ENCODE measurements at regions of chr1 and their contacts with region 1.

Region 1: DNA sequence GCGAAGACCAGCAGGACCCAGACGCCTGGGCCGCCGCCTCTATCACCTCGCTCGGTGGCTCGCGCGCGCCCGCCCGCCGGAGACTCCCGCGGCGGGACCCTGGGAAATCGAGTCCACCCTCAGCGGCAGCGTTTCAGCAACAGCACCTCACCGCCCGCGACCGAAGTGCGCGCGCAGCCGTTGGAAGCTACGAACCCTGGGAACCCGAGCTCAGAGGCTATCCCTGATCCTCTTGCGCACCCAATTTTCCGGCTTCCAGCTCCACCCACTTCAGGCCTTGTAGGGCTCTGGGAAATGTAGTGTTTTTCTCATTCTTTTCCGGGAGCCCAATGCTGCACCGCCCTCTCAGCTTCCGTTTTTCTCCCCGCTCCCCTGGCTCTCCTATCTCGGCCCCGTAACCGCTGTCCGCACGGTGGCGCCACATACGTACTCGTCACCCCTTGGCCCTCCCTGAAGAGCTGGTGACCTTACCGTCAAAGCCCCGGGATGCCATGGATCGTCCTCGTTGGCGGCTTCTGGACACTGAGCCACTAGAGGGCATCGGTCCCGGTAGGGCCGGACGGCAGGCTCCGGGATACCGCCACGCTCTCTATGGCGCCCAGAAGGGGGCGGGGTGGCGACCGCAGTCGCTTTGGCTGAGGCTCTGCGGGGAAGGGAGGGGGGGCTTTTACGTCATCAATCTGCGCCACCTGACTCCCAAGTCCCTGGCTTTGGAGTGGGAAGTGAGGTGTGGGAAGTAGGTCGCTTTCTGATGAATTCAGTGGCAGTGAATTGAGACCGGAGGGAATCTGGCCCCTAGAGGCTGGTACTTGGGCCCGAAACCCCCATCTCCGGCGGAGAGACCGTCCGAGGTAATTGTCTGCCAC is at the starts of genes ODR4 and TPR:
- DNase-seq: peak; percentile 97 to 99
- H3K4me3 ChIP-seq: peak within 1 kb of the TSS; percentile 78
- H3K4me3 Mint-ChIP-seq: peak within 1 kb of the TSS; percentile 98
- H3K27ac Mint-ChIP-seq: peak within 1 kb of the TSS; percentile 100
- H3K4me1 ChIP-seq: no peaks in the 10 kb centered on the region
- H3K4me1 Mint-ChIP-seq: no peaks in the 10 kb centered on the region
- H3K27me3 ChIP-seq: no peaks in the 10 kb centered on the region
- H3K27me3 Mint-ChIP-seq: no peaks in the 10 kb centered on the region
- CTCF ChIP-seq: peak; percentile 86 to 90
- total RNA-seq, gene ODR4: 29.1 and 32.0 TPM in 2 replicates
- total RNA-seq, gene TPR: 172 and 178 TPM in 2 replicates

Region 2: DNA sequence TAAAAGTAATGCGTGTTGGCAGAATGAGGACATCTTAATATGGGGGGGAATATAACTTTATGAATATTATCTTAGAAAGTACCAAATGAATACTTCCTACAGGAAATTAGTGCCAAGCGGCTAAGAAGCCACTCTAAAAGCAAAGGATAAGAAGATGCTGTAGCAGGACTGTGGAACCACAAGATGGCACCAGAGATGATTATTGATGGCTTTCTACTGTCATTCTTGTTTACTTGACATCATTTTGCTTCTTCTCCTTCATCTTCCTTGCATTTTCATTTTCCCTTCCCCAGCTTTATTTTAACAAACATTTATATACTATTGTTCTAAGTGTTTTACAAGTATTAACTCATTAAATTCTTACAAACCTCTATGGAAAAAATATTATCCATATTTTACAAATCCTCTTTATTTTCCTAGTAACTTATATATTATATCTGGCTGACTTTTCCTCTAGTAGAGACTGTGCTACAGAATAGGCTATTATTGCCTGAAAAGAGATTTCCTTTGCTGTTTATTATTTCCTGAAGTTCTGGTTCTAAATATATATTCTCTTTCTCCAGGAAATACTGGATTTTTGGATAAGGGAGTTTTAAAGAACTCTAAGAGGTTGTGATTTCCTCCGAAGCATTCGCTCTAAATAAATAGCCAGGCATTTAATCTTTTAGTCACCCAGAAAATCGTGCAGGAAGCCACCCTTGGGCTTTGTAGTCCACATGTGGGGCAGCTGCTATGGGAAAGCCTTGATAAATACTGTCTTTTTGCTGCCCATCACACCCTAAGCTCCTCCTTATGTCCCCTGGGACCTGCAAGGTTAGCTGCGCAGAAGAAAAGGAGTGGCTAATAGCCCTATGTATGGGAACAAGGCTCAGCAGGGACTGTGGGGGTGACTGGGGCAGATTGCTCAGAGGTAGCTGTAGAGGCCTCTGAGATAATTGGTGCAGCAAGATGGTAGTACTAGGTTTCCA is 70.1 kb before region 1 on chr1:
- CTCF ChIA-PET with region 1: no interaction called
- POLR2A ChIA-PET with region 1: no interaction called
- intact Hi-C with region 1: no loop called
- DNase-seq: peak in 1 of 2 experiments; percentile 34
- H3K4me3 ChIP-seq: no peak overlapping the region
- H3K4me3 Mint-ChIP-seq: no peak overlapping the region
- H3K27ac Mint-ChIP-seq: no peak overlapping the region
- H3K4me1 ChIP-seq: 0 out of 2 replicates have a peak, but pooled peaks cover 4% of the 10 kb centered on the region
- H3K4me1 Mint-ChIP-seq: no peaks in the 10 kb centered on the region
- H3K27me3 ChIP-seq: no peaks in the 10 kb centered on the region
- H3K27me3 Mint-ChIP-seq: no peaks in the 10 kb centered on the region
- CTCF ChIP-seq: peak; percentile 67 to 68

Region 3: DNA sequence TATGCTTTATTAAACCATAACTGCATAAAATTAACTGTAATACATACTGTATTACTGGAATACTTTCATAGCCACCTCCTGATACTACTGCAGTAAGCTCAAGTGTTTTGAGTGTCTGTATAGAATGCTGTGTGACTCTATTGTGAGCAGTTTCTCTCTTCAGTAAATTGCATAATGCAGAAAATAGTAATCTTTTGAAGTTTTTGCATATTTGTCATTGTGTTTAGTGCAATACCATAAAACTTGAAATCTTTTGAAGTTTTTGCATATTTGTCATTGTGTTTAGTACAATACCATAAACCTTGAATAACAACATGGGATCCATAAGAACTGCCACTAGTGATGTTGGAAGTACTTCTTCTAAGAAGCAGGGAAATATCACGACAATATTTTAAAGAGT is 11.4 kb before region 1 on chr1:
- CTCF ChIA-PET with region 1: interaction called, 12 read pairs
- POLR2A ChIA-PET with region 1: interaction called, 9 read pairs
- intact Hi-C with region 1: no loop called
- DNase-seq: no peak
- H3K4me3 ChIP-seq: no peak overlapping the region
- H3K4me3 Mint-ChIP-seq: no peak overlapping the region
- H3K27ac Mint-ChIP-seq: no peak overlapping the region
- H3K4me1 ChIP-seq: 0 out of 2 replicates have a peak, but pooled peaks cover 3% of the 10 kb centered on the region
- H3K4me1 Mint-ChIP-seq: peaks cover 17% of the 10 kb centered on the region
- H3K27me3 ChIP-seq: no peaks in the 10 kb centered on the region
- H3K27me3 Mint-ChIP-seq: no peaks in the 10 kb centered on the region
- CTCF ChIP-seq: no peak

Region 4: GRCh38 chr1:186535388-186536133 is 160.2 kb after region 1 on chr1:
- CTCF ChIA-PET with region 1: no interaction called
- POLR2A ChIA-PET with region 1: no interaction called
- intact Hi-C with region 1: no loop called
- DNase-seq: no peak
- H3K4me3 ChIP-seq: no peak overlapping the region
- H3K4me3 Mint-ChIP-seq: no peak overlapping the region
- H3K27ac Mint-ChIP-seq: no peak overlapping the region
- H3K4me1 ChIP-seq: no peaks in the 10 kb centered on the region
- H3K4me1 Mint-ChIP-seq: no peaks in the 10 kb centered on the region
- H3K27me3 ChIP-seq: no peaks in the 10 kb centered on the region
- H3K27me3 Mint-ChIP-seq: no peaks in the 10 kb centered on the region
- CTCF ChIP-seq: no peak

Region 5: GRCh38 chr1:186572509-186572908 is 197.2 kb after region 1 on chr1:
- CTCF ChIA-PET with region 1: no interaction called
- POLR2A ChIA-PET with region 1: no interaction called
- intact Hi-C with region 1: no loop called
- DNase-seq: no peak
- H3K4me3 ChIP-seq: no peak overlapping the region
- H3K4me3 Mint-ChIP-seq: no peak overlapping the region
- H3K27ac Mint-ChIP-seq: no peak overlapping the region
- H3K4me1 ChIP-seq: 0 out of 2 replicates have a peak, but pooled peaks cover 4% of the 10 kb centered on the region
- H3K4me1 Mint-ChIP-seq: peaks cover 6% of the 10 kb centered on the region
- H3K27me3 ChIP-seq: no peaks in the 10 kb centered on the region
- H3K27me3 Mint-ChIP-seq: no peaks in the 10 kb centered on the region
- CTCF ChIP-seq: no peak